ENCODE measurements at regions of chr4 and their contacts with region 1.

Region 1: DNA sequence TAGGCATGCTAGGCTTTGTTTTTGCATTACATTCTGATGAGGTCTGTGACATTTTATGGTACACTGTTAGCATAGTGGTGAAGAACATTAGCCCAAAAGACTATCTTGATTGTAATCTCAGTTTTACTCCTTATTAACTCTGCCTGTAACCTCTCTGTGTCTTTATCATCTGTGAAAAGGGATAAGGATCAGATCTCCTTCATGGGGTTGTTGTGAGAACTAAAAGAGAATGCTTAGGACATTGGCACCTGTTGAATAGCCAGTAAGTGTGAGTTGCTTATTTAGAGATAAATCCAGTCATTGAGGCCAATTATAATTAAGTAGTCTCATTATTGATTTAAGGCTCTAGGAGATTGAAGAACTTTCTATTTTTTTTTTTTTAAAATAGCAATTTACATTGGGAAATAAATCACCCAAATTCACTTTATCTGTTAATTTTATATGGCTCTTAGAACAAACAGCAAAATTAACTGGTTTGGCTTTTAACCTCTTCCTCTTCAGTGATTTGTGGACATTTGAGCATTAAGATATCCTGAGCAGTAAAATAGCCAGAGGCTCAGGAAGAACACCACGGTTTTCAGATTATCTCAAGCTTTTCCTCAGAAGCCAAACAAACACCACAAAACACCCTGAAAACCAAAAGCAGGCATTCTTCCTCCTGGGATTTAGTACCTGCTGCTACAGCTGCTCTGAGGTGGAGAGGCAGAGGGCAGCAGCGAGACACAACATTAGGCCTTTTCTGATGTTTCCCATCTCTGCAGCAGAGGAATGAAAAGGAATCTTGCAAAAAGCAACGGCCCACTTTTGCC is 192.9 kb downstream of the ARHGAP10 start:
- DNase-seq: peak; percentile 36
- H3K4me3 Mint-ChIP-seq: no peak overlapping the region
- H3K27ac Mint-ChIP-seq: no peak overlapping the region
- H3K4me1 Mint-ChIP-seq: no peaks in the 10 kb centered on the region
- H3K27me3 Mint-ChIP-seq: no peaks in the 10 kb centered on the region
- CTCF ChIP-seq: no peak

Region 2: GRCh38 chr4:147780137-147780777 is 144.6 kb before region 1 on chr4:
- CTCF ChIA-PET with region 1: no interaction called
- intact Hi-C with region 1: no loop called
- DNase-seq: no peak
- H3K4me3 Mint-ChIP-seq: no peak overlapping the region
- H3K27ac Mint-ChIP-seq: no peak overlapping the region
- H3K4me1 Mint-ChIP-seq: peaks cover 21% of the 10 kb centered on the region
- H3K27me3 Mint-ChIP-seq: no peaks in the 10 kb centered on the region
- CTCF ChIP-seq: no peak

Region 3: DNA sequence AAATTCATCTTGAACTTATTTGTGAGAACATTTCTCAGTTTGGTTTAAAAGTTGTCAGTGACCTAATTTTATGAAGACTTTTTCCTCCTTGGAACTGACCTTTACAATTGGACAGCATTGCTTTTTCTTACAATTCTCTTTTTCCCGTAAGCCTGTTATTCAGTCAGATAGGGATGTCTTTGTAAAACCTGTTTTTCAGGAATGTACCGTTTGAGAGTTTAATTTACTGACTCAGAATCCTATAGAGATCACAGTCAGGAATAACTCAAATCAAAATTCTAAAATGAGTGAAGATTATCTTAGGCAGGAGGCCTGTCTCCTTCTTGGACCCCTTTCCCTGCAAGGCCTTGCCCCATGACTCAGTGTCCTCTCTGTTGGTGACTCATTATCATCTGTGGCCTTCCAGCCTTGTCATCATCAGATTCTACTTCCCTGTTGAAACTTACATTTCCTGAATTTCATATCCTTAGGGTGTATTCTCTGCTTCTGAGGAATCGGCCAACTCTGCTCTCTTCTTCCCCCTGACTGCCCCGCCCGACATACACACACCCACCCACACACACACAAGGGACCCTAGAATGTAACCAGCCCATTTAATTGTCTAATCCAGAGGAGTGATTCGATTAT is 93.1 kb before region 1 on chr4:
- CTCF ChIA-PET with region 1: no interaction called
- intact Hi-C with region 1: no loop called
- DNase-seq: peak; percentile 26
- H3K4me3 Mint-ChIP-seq: peak overlapping the region; percentile 37
- H3K27ac Mint-ChIP-seq: peak overlapping the region; percentile 75
- H3K4me1 Mint-ChIP-seq: peaks cover 25% of the 10 kb centered on the region
- H3K27me3 Mint-ChIP-seq: no peaks in the 10 kb centered on the region
- CTCF ChIP-seq: no peak

Region 4: GRCh38 chr4:148173397-148174017 is 248.7 kb after region 1 on chr4:
- CTCF ChIA-PET with region 1: no interaction called
- intact Hi-C with region 1: no loop called
- DNase-seq: no peak
- H3K4me3 Mint-ChIP-seq: no peak overlapping the region
- H3K27ac Mint-ChIP-seq: peak overlapping the region; percentile 71
- H3K4me1 Mint-ChIP-seq: peaks cover 14% of the 10 kb centered on the region
- H3K27me3 Mint-ChIP-seq: no peaks in the 10 kb centered on the region
- CTCF ChIP-seq: no peak

Region 5: DNA sequence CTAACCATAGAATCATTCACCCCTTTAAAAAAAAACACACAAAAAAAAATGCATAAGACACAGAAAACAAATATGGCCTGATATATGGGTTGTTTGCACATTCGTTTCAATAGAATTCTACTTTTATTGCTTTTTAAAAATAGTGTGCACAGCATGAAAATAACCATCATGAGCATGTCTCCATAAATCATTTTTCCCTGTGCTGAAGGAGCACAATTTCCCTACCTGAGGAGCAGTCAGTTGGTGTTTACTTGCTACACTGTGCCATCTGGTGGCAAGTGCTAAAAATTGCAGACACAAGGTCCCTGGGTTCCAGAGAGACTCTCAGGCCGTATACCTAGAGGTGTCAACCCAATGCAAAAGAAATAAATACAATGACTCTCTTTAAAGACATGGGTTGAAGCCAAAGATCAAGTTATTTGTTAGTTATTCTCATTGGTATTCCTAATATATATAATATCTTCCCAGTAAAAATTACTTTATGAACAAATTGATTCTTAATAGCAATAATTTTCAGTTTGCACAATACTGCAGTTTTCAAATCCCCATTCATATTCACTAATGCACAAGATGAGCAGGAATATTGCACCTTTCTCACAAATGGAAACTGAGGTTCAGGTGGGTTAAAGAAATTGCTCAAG is 1339.4 kb after region 1 on chr4:
- CTCF ChIA-PET with region 1: no interaction called
- intact Hi-C with region 1: loop called (anchors 5 kb)
- DNase-seq: peak; percentile 30
- H3K4me3 Mint-ChIP-seq: no peak overlapping the region
- H3K27ac Mint-ChIP-seq: no peak overlapping the region
- H3K4me1 Mint-ChIP-seq: no peaks in the 10 kb centered on the region
- H3K27me3 Mint-ChIP-seq: no peaks in the 10 kb centered on the region
- CTCF ChIP-seq: no peak